Thyroid gland (tissue), 4 donors: ENCODE measurements at regions of chr9 and their contacts with region 1.

Region 1: GRCh38 chr9:14314929-14315645 is 1.1 kb upstream of the NFIB start:
- DNase-seq: peak; percentile 97
- H3K4me3 ChIP-seq: peak overlapping the region; percentile 66 to 85 (median 76)
- H3K27ac ChIP-seq: peak overlapping the region; percentile 98 to 100 (median 98)
- H3K4me1 ChIP-seq: peaks cover 18 to 30% of the 10 kb centered on the region in 2 donors
- H3K27me3 ChIP-seq: no peaks in the 10 kb centered on the region
- CTCF ChIP-seq: peak in 2 of 6 experiments; percentile 8 to 15
- POLR2A ChIP-seq: peak; percentile 14 to 81

Region 2: GRCh38 chr9:14027116-14027800 is 287.8 kb before region 1 on chr9:
- intact Hi-C with region 1: loop called (anchors 10 kb)
- DNase-seq: peak; percentile 89 to 91
- H3K4me3 ChIP-seq: no peak overlapping the region
- H3K27ac ChIP-seq: peak overlapping the region; percentile 86 to 90 (median 90)
- H3K4me1 ChIP-seq: peaks cover 34 to 43% of the 10 kb centered on the region in 2 donors
- H3K27me3 ChIP-seq: no peaks in the 10 kb centered on the region
- CTCF ChIP-seq: peak in 1 of 6 experiments; percentile 2
- POLR2A ChIP-seq: peak in 1 of 2 donors; percentile 23

Region 3: DNA sequence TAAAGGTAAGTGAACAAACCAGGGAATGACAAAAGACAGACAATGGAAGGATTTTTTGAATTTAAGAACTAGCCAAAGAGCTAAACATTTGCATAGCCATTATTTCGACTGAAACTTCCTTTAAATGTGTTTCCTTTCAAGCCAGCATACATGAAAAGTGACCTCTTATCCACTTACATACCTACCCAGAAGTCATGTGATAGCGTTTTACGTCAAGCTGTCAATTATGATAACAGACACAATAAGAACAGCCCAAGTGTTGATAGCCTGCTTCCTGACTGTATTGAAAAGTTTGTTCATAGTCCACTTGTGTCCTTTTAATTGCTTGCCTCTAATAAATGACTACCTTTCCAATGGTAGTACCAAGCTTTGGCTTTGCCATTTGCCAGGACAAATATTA is 207.1 kb before region 1 on chr9:
- intact Hi-C with region 1: loop called (anchors 10 kb)
- DNase-seq: no peak
- H3K4me3 ChIP-seq: no peak overlapping the region
- H3K27ac ChIP-seq: no peak overlapping the region
- H3K4me1 ChIP-seq: peaks cover 0 to under 1% of the 10 kb centered on the region in 2 donors
- H3K27me3 ChIP-seq: no peaks in the 10 kb centered on the region
- CTCF ChIP-seq: no peak
- POLR2A ChIP-seq: no peak

Region 4: DNA sequence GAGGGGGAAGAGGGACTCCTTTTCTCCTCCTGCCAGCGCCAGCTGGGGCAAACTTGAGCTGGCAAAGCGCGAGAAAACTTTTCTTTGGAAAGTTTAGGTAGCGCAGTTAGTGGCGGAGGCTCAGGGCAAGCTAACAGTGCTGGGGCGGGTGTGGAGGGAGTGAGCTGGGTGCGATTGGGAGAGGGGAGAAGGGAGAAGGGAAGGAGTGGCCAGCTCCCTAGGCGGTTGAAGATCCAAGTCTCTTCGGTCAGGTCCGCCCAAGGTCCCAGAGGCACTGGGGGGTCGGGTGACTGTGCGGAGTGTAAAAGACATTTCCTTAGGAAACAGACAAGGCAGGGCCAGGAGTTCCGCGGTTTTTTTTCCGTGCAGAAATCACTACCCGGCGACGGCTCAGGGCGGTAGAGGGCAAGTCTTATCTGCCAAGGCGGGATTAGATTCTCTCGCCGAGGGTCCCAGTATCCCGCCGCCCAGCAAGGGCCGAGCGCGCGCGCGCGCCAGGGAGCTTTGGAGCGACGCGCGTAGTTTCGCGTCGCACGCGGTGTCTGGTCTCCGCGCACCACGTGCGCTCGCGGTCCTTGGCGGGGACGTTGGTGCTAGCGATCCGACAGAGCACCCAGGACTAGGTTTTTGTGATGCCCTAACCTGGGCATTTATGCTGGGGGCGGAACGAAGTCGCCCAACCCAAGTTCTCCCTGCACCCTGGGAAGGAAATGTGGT is 32.5 kb after region 1 on chr9:
- intact Hi-C with region 1: loop called (anchors 5 kb)
- DNase-seq: peak; percentile 45 to 53
- H3K4me3 ChIP-seq: peak overlapping the region; percentile 27 to 32 (median 27)
- H3K27ac ChIP-seq: peak overlapping the region; percentile 71 to 76 (median 74)
- H3K4me1 ChIP-seq: peaks cover 33 to 36% of the 10 kb centered on the region in 2 donors
- H3K27me3 ChIP-seq: peaks cover 12% of the 10 kb centered on the region
- CTCF ChIP-seq: peak in 1 of 6 experiments; percentile 14
- POLR2A ChIP-seq: peak in 1 of 2 donors; percentile 24